ENCODE measurements at regions of chr2 and their contacts with region 1.

Region 1: DNA sequence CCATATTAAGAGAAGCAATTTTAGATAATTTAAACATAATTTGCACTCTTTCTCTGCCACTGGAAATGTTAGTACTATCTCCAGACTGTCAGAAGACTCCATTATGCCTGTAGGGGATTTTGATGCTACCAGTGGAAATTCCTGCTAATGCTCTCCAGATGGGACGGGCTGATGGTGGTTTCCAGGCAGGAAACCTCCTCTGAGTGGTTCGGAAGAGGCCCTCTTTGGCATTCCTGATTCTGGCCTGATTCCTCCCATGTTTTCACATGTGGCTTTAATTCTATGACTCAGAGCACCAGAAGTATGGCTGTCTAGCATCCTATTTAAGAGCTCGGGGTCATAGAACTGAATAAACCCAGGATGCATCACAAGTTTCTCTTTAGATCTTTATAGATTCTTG is 70.9 kb upstream of the ST6GAL2 start:
- DNase-seq: no peak
- H3K4me3 ChIP-seq: no peak overlapping the region
- H3K27ac ChIP-seq: no peak overlapping the region
- H3K4me1 ChIP-seq: no peaks in the 10 kb centered on the region
- H3K27me3 ChIP-seq: no peaks in the 10 kb centered on the region
- CTCF ChIP-seq: no peak

Region 2: GRCh38 chr2:106995556-106995955 is 38.7 kb after region 1 on chr2:
- CTCF ChIA-PET with region 1: no interaction called
- dilution Hi-C with region 1: loop called (anchors 5 kb)
- in situ Hi-C with region 1: no loop called
- intact Hi-C with region 1: no loop called
- DNase-seq: no peak
- H3K4me3 ChIP-seq: no peak overlapping the region
- H3K27ac ChIP-seq: no peak overlapping the region
- H3K4me1 ChIP-seq: no peaks in the 10 kb centered on the region
- H3K27me3 ChIP-seq: no peaks in the 10 kb centered on the region
- CTCF ChIP-seq: no peak

Region 3: DNA sequence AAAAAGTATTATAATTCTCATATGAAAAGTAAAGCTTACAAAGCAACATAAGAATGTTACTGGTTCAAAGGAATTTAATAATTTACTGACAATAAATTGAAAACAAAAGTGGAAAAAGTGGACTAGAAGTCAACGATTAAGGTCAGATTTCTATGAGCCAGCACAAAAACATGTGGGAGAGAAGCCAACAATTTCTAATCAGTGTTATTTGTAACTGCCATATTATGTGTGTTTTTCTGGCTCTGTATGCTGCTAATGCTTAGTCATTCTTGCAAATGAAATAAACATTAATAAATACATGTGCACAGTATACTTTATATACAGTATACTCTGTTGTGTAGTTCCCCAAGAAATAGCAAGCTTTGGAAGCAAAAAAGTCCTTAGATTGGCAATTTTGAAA is 568.5 kb after region 1 on chr2:
- CTCF ChIA-PET with region 1: no interaction called
- dilution Hi-C with region 1: no loop called
- in situ Hi-C with region 1: no loop called
- intact Hi-C with region 1: no loop called
- DNase-seq: no peak
- H3K4me3 ChIP-seq: no peak overlapping the region
- H3K27ac ChIP-seq: no peak overlapping the region
- H3K4me1 ChIP-seq: no peaks in the 10 kb centered on the region
- H3K27me3 ChIP-seq: no peaks in the 10 kb centered on the region
- CTCF ChIP-seq: no peak

Measured in mammary epithelial cell (primary cell).